H1 (cell line): ENCODE measurements at regions of chr7 and their contacts with region 1.

Region 1: DNA sequence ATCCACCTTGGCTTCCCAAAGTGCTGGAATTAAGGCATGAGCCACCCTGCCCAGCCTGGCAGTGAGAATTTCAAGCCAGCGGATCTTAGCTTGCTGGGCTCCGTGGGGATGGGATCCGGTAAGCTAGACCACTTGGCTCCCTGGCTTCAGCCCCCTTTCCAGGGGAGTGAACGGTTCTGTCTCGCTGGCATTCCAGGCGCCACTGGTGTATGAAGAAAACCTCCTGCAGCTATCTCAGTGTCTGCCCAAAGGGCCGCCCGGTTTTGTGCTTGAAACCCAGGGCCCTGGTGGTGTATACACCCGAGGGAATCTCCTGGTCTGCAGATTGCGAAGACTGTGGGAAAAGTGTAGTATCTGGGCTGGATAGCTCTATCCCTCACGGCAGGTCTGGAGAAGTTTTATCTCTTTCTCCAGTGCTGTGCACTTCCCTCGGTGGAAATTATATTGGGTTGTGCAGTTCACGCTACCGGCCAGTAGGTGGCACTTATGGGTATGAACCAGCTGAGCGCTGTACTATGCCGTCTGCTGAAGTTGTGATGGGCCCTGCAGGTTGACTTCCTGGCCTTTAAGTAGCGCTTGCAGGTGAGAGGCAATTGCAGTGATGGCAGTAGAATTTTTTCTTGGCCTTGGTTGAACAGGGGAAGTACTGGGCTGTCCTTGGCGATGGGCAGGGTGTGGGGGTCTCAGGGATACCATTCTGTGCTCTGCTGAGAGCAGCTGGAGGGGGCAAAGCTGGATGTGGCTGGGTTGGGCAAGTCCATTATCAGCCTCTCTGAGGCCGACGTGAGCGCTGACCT is 138.0 kb upstream of the MTPN start:
- DNase-seq: peak; percentile 31 to 82
- H3K4me3 ChIP-seq: no peak overlapping the region
- H3K27ac ChIP-seq: no peak overlapping the region
- H3K4me1 ChIP-seq: no peaks in the 10 kb centered on the region
- H3K27me3 ChIP-seq: no peaks in the 10 kb centered on the region
- CTCF ChIP-seq: peak; percentile 83 to 89 (median 85)
- EP300 ChIP-seq: no peak
- POLR2A ChIP-seq: no peak
- RAD21 ChIP-seq: peak; percentile 75 to 82

Region 2: DNA sequence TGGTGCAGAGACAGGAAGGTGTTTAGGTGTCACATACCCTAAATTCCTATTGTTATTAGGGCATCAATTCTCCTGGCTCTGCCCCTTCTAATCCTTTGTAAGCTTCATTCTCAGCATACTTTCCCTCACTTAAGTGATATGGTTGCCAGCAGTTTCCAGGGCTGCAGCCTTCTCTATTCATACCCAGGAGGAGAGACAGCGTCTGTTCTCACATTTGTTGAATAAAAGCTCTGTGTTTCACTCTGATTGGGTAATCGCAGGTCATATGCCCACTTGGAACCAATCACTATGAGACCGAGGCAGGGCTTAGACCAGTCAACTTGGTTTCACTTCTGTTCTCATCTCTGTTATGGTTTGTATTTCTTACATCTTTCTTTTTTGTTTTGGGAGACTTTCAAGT is 28.5 kb before region 1 on chr7:
- CTCF ChIA-PET with region 1: interaction called, 11 read pairs
- POLR2A ChIA-PET with region 1: no interaction called
- DNase-seq: peak; percentile 52 to 62
- H3K4me3 ChIP-seq: peak overlapping the region in 1 of 4 experiments; percentile 44; a peak in 1 of 8 replicates
- H3K27ac ChIP-seq: no peak overlapping the region
- H3K4me1 ChIP-seq: no peaks in the 10 kb centered on the region
- H3K27me3 ChIP-seq: no peaks in the 10 kb centered on the region
- CTCF ChIP-seq: no peak
- EP300 ChIP-seq: no peak
- POLR2A ChIP-seq: no peak
- RAD21 ChIP-seq: no peak

Region 3: GRCh38 chr7:136104269-136104603 is 10.9 kb before region 1 on chr7:
- CTCF ChIA-PET with region 1: interaction called, 19 read pairs
- POLR2A ChIA-PET with region 1: no interaction called
- DNase-seq: no peak
- H3K4me3 ChIP-seq: no peak overlapping the region
- H3K27ac ChIP-seq: no peak overlapping the region
- H3K4me1 ChIP-seq: no peaks in the 10 kb centered on the region
- H3K27me3 ChIP-seq: no peaks in the 10 kb centered on the region
- CTCF ChIP-seq: no peak
- EP300 ChIP-seq: no peak
- POLR2A ChIP-seq: no peak
- RAD21 ChIP-seq: no peak

Region 4: DNA sequence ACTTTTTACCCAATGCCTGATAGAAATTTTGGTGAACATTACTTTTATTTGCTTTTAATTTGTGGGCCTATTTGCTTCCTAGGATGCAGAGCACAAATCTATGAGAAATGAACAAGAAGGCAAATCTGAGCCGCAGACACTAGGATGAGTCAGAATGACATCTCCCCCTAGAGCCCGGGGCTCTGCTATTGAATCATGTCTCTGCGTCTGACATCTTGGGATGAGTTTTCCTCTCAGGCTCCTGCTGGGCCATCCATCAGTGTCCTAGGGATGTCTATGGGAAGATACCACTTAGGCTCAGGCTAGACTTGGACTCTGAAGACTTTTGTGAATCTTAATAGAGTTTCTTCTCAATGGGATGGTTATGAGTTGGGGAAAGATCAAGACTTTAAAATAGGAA is 19.3 kb after region 1 on chr7:
- CTCF ChIA-PET with region 1: interaction called, 35 read pairs
- POLR2A ChIA-PET with region 1: no interaction called
- DNase-seq: no peak
- H3K4me3 ChIP-seq: no peak overlapping the region
- H3K27ac ChIP-seq: no peak overlapping the region
- H3K4me1 ChIP-seq: peaks cover 0 to 5% (median 0%) of the 10 kb centered on the region in 4 experiments; a peak in 4 of 7 replicates
- H3K27me3 ChIP-seq: no peaks in the 10 kb centered on the region
- CTCF ChIP-seq: no peak
- EP300 ChIP-seq: no peak
- POLR2A ChIP-seq: no peak
- RAD21 ChIP-seq: 0 out of 4 replicates have a peak, but pooled peaks of 1 of the 2 experiments have one; percentile 4

Region 5: DNA sequence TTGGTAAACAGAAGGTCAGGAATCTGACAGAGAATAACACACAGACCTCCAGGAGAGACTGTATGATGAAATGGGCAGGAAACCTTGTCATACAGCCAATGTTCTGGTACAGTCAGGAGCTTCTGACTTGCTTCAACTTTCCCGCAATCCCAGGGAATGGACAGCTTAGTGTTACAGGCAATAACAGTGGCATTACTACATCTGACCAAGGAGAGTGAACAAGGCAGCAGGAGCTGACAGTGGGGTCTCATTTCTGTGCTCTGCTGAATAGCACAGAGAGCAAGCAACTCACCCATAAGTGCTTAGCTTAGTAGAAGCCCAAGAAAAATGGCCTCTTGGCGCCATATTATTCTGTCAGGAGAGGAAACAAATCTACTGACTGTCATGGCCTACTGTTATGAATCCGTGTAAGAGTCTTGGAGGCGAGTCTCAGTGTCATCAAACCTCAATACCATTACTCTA is 48.2 kb after region 1 on chr7:
- CTCF ChIA-PET with region 1: no interaction called
- POLR2A ChIA-PET with region 1: no interaction called
- DNase-seq: no peak
- H3K4me3 ChIP-seq: no peak overlapping the region
- H3K27ac ChIP-seq: no peak overlapping the region
- H3K4me1 ChIP-seq: no peaks in the 10 kb centered on the region
- H3K27me3 ChIP-seq: no peaks in the 10 kb centered on the region
- CTCF ChIP-seq: no peak
- EP300 ChIP-seq: no peak
- POLR2A ChIP-seq: no peak
- RAD21 ChIP-seq: no peak